ENCODE measurements at regions of chr4 and their contacts with region 1.

Region 1: GRCh38 chr4:1726146-1726934 is 5.0 kb downstream of the TACC3 start:
- DNase-seq: peak; percentile 67
- H3K4me3 ChIP-seq: no peak overlapping the region
- H3K27ac ChIP-seq: peak overlapping the region; percentile 49
- H3K4me1 ChIP-seq: peaks cover 54% of the 10 kb centered on the region
- H3K27me3 ChIP-seq: no peaks in the 10 kb centered on the region
- CTCF ChIP-seq: peak; percentile 94 to 98

Region 2: GRCh38 chr4:1365271-1366178 is 360.8 kb before region 1 on chr4:
- CTCF ChIA-PET with region 1: no interaction called
- dilution Hi-C with region 1: no loop called
- in situ Hi-C with region 1: no loop called
- intact Hi-C with region 1: loop called (anchors 5 kb)
- DNase-seq: peak; percentile 75
- H3K4me3 ChIP-seq: no peak overlapping the region
- H3K27ac ChIP-seq: no peak overlapping the region
- H3K4me1 ChIP-seq: peaks cover 10% of the 10 kb centered on the region
- H3K27me3 ChIP-seq: no peaks in the 10 kb centered on the region
- CTCF ChIP-seq: no peak

Region 3: DNA sequence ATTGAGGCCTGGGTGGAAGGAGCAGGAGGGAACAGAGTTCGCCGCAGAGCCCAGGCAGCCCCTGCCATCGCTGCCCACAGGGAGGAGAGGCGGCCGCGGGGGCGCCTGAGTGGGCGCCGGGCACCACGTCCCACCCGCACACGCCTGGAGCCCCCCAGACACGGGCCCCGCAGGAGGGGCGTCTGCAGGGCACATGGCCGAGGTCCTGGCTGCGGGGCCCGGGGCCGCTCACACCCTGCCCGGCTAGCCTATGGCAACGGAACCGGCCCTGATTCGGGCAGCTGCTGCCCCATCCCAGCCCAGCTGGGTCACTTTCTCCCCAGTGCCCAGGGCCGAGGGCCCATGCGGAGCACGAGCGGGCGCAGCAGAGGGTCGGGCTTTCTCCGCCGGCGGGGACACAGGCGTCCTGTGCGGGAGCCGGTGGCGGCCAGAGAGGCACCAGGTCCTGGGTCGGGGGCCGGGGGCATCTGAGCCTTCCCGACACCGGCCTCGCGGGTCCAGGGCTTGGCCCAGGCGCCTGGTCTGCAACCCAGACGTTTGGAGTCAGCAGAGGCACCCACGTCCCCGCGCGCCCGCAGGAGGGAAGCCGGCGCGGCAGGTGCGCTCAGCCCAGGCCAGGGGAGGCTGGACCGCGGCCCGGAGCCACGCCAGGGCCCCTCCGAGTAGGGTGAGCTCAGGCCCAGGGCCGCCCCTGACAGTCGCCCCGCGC is 133.5 kb before region 1 on chr4:
- CTCF ChIA-PET with region 1: no interaction called
- dilution Hi-C with region 1: no loop called
- in situ Hi-C with region 1: no loop called
- intact Hi-C with region 1: no loop called
- DNase-seq: no peak
- H3K4me3 ChIP-seq: no peak overlapping the region
- H3K27ac ChIP-seq: no peak overlapping the region
- H3K4me1 ChIP-seq: no peaks in the 10 kb centered on the region
- H3K27me3 ChIP-seq: peaks cover 20% of the 10 kb centered on the region
- CTCF ChIP-seq: no peak

Region 4: GRCh38 chr4:1693129-1693896 is 33.0 kb before region 1 on chr4:
- CTCF ChIA-PET with region 1: interaction called, 13 read pairs
- dilution Hi-C with region 1: no loop called
- in situ Hi-C with region 1: no loop called
- intact Hi-C with region 1: loop called (anchors 1 kb)
- DNase-seq: peak; percentile 68
- H3K4me3 ChIP-seq: no peak overlapping the region
- H3K27ac ChIP-seq: no peak overlapping the region
- H3K4me1 ChIP-seq: no peaks in the 10 kb centered on the region
- H3K27me3 ChIP-seq: no peaks in the 10 kb centered on the region
- CTCF ChIP-seq: peak; percentile 95 to 96

Region 5: GRCh38 chr4:1899149-1900086 is 173.1 kb after region 1 on chr4:
- CTCF ChIA-PET with region 1: no interaction called
- dilution Hi-C with region 1: no loop called
- in situ Hi-C with region 1: loop called in 1 of 2 experiments (anchors 25 kb)
- intact Hi-C with region 1: no loop called
- DNase-seq: peak; percentile 60
- H3K4me3 ChIP-seq: no peak overlapping the region
- H3K27ac ChIP-seq: no peak overlapping the region
- H3K4me1 ChIP-seq: no peaks in the 10 kb centered on the region
- H3K27me3 ChIP-seq: no peaks in the 10 kb centered on the region
- CTCF ChIP-seq: peak; percentile 76 to 87

Region 6: GRCh38 chr4:2662598-2662997 is 936.3 kb after region 1 on chr4:
- CTCF ChIA-PET with region 1: no interaction called
- dilution Hi-C with region 1: no loop called
- in situ Hi-C with region 1: no loop called
- intact Hi-C with region 1: no loop called
- DNase-seq: peak; percentile 52
- H3K4me3 ChIP-seq: no peak overlapping the region
- H3K27ac ChIP-seq: no peak overlapping the region
- H3K4me1 ChIP-seq: no peaks in the 10 kb centered on the region
- H3K27me3 ChIP-seq: no peaks in the 10 kb centered on the region
- CTCF ChIP-seq: no peak

Measured in mammary epithelial cell (primary cell).